ENCODE measurements at regions of chr2 and their contacts with region 1.

Region 1: DNA sequence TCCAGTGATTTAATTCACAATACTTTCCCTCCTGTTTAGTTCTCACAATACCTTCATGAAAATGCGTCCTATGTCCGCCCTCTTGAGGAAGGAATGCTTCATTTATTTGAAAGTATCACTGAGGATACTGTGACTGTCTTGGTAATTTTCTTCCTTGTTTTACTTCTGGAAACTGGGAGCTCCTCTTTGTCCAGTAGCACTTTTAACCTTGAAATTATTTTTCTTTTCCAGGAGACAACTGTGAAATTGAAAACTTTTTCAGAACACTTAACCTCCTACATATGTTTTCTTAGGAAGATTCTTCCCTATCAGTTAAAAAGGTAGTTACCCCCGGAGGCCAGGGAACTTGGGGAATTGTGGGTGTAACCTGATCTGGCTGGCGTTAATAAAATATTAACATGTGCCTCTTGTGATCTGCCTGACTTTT is 58.9 kb upstream of the STON1 start:
- DNase-seq: peak; percentile 83
- H3K4me3 ChIP-seq: no peak overlapping the region
- H3K27ac ChIP-seq: no peak overlapping the region
- H3K4me1 ChIP-seq: no peaks in the 10 kb centered on the region
- H3K27me3 ChIP-seq: no peaks in the 10 kb centered on the region
- CTCF ChIP-seq: peak; percentile 27 to 28
- POLR2A ChIP-seq: no peak

Region 2: DNA sequence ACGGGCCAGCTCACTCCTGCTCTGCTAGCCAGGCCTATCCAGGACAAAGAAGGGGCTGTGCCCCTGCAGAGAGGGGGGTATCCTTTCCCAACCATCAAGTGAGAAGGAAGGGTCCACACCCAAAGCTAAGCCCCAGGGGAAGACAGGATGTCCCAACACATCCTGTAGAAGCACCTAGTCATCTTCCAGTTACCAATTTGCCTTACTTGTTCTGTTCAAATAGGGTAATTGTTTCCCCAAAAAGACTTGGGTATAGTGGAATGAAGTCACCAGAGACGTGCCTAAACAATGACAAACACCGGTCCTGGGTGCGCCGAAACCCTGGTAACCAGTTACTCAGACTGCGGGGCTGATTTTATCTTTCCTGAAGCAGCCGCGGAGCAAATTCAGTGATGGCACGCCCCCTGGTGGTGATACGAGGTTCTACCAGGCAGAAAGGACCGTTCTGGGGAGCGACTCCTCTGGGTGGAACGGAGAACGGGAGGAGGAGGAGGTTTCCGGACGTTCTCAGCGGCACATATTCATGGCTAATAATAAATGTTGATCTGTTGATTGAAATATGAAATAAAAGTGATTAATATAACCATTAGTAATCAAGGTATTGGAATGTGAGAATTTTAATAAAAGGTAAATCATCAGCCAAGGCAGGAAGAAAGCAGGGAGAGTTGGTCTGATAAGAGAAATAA is 50.4 kb before region 1 on chr2:
- CTCF ChIA-PET with region 1: interaction called, 14 read pairs
- POLR2A ChIA-PET with region 1: no interaction called
- dilution Hi-C with region 1: no loop called
- intact Hi-C with region 1: no loop called
- DNase-seq: peak; percentile 85
- H3K4me3 ChIP-seq: peak overlapping the region in 1 of 3 experiments; percentile 8
- H3K27ac ChIP-seq: peak overlapping the region; percentile 39
- H3K4me1 ChIP-seq: peaks cover 5% of the 10 kb centered on the region
- H3K27me3 ChIP-seq: no peaks in the 10 kb centered on the region
- CTCF ChIP-seq: peak; percentile 88 to 93
- POLR2A ChIP-seq: no peak

Region 3: DNA sequence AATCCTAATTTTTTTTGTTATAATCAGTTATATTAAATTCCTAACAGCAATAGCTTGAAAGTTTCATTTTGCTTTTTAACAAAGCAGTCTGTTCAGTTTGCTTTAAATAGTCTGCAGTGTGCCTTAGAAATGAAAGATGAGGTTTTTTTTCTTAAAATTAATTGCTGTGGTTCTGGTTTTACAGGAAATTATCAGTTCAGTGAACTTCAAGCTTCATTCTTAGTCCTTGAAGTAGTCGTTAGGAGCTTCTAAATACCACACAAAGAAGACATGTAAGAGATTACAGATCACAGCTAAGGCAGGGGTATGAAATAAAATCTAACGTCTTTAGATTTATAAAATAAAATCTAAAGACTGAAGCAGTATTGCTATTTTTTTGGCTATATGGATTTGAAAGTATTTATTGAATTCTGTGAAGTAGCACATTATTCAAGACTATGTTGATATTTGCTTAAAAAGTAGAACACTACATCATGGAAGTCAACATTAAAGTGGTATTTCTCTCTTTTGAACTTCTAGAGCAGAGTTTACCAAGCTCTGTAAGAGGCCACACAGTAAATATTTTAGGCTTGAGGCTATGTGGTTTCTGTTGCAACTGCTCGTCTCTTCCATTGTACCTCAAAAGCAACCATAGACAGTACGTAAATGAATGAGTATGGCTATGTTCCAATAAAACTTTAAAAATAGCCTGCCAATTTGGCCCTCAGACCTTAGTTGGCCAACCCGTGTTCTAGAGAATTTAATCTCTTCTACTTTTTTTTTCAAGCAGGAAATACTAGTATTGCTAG is 22.6 kb before region 1 on chr2:
- CTCF ChIA-PET with region 1: interaction called, 34 read pairs
- POLR2A ChIA-PET with region 1: no interaction called
- dilution Hi-C with region 1: no loop called
- intact Hi-C with region 1: no loop called
- DNase-seq: no peak
- H3K4me3 ChIP-seq: no peak overlapping the region
- H3K27ac ChIP-seq: no peak overlapping the region
- H3K4me1 ChIP-seq: no peaks in the 10 kb centered on the region
- H3K27me3 ChIP-seq: no peaks in the 10 kb centered on the region
- CTCF ChIP-seq: no peak
- POLR2A ChIP-seq: no peak

Region 4: GRCh38 chr2:48457227-48457626 is 13.8 kb before region 1 on chr2:
- CTCF ChIA-PET with region 1: interaction called, 34 read pairs
- POLR2A ChIA-PET with region 1: no interaction called
- dilution Hi-C with region 1: no loop called
- intact Hi-C with region 1: no loop called
- DNase-seq: no peak
- H3K4me3 ChIP-seq: no peak overlapping the region
- H3K27ac ChIP-seq: no peak overlapping the region
- H3K4me1 ChIP-seq: no peaks in the 10 kb centered on the region
- H3K27me3 ChIP-seq: no peaks in the 10 kb centered on the region
- CTCF ChIP-seq: no peak
- POLR2A ChIP-seq: no peak

Region 5: DNA sequence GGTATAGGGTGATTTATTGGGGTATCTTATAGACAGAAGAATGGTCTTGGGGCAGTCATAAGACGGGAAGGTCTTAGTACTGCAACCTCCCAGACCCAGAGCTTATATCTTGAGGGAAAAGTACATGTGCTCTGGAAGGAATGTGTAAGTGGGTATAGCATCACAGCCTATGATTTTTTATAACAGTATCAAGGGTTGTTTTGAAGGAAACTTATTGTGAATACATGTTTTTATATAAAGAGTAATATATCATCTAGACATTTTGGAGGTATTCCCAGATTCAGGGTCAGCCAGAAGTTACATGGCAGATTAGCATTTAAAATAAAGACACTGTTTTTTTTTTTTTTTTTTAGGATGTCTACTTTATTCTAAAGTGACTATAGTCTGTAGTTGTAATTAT is 11.3 kb after region 1 on chr2:
- CTCF ChIA-PET with region 1: interaction called, 20 read pairs
- POLR2A ChIA-PET with region 1: no interaction called
- dilution Hi-C with region 1: no loop called
- intact Hi-C with region 1: no loop called
- DNase-seq: peak; percentile 97
- H3K4me3 ChIP-seq: no peak overlapping the region
- H3K27ac ChIP-seq: peak overlapping the region; percentile 39
- H3K4me1 ChIP-seq: peaks cover 10% of the 10 kb centered on the region
- H3K27me3 ChIP-seq: no peaks in the 10 kb centered on the region
- CTCF ChIP-seq: no peak
- POLR2A ChIP-seq: no peak

Region 6: DNA sequence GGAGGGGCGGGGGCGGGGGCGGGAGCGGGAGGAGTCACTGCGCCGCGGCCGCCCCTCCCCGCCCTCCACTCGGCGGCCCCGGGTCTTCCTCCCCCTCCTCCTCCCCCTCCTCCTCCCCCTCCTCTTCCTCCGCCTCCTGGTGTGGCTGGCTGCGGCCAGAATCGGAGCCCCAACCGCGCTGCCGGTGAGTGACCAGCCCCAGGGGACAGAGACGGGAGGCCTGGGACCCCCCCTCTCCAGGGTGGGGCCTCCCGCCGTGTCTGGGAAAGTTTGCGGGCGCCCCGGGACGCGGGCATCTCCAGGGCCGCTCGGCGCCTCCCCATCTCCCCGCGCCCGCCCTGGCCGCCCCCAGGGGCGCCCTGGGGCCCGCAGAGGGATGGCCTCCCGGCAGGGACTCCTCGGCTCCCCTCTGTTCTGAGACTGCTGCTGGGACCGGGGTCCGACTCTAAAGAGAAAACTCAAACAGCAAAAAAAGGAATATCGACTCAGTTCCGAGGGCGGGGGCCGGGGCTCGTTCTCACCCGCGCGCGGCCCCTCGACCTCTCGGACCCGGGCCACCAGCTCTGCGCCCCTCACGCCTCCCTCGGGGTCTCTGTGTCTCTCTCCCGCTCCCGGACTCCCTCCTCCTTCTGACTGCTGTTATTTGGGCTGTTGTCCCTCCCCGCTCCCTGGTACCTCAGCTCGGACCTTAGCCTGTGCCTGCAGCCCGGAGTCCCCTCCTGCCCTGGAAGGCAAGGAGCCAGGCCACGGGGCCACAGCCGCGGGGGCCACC is 59.2 kb after region 1 on chr2 and contains the start of gene STON1:
- CTCF ChIA-PET with region 1: interaction called, 10 read pairs
- POLR2A ChIA-PET with region 1: no interaction called
- dilution Hi-C with region 1: no loop called
- intact Hi-C with region 1: loop called (anchors 2 kb)
- DNase-seq: peak; percentile 38
- H3K4me3 ChIP-seq: peak within 1 kb of the TSS; percentile 49 to 83 (median 81)
- H3K27ac ChIP-seq: peak within 1 kb of the TSS; percentile 40
- H3K4me1 ChIP-seq: peaks cover 25% of the 10 kb centered on the region
- H3K27me3 ChIP-seq: no peaks in the 10 kb centered on the region
- CTCF ChIP-seq: no peak
- POLR2A ChIP-seq: peak; percentile 20
- total RNA-seq, gene STON1: 12.0 and 12.1 TPM in 2 replicates

Region 7: DNA sequence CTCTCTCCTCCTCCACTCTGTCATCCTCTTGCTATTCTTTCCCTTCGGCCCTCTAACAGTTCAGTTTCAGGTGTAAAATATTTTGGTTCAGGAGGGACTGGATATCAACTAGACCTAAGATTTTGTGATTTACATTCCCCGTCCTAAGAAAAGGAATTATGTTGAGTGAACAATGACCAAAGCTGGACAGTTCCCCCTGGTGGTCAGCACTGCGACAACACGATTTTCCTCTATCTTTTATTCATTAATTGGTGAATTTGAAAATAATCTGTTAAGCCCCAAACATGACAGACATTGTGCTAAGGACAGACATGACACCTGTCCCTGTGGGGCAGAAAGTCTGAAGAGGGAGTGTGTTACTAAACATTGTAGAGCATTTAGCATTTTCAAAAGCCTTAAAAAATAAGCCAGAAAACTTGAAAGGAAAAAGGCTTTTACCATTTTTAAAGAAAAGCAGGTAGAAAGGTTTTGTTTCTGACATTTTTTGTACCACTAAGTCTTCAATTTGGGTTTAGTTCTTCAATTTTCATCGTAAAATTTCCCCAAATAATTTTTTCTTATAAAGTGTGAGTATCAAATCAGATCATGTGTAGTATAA is 118.2 kb after region 1 on chr2:
- CTCF ChIA-PET with region 1: interaction called, 37 read pairs
- POLR2A ChIA-PET with region 1: no interaction called
- dilution Hi-C with region 1: no loop called
- intact Hi-C with region 1: loop called (anchors 1 kb)
- DNase-seq: peak; percentile 72
- H3K4me3 ChIP-seq: no peak overlapping the region
- H3K27ac ChIP-seq: no peak overlapping the region
- H3K4me1 ChIP-seq: no peaks in the 10 kb centered on the region
- H3K27me3 ChIP-seq: no peaks in the 10 kb centered on the region
- CTCF ChIP-seq: peak; percentile 71
- POLR2A ChIP-seq: no peak

Measured in endothelial cell of umbilical vein (primary cell).